HEK293 (cell line): ENCODE measurements at regions of chr7 and their contacts with region 1.

Region 1: GRCh38 chr7:141785706-141786552 is 4.1 kb upstream of the TAS2R5 start:
- H3K4me3 ChIP-seq: no peak overlapping the region
- H3K27ac ChIP-seq: no peak overlapping the region
- H3K4me1 ChIP-seq: no peaks in the 10 kb centered on the region
- CTCF ChIP-seq: peak; percentile 41; the same call in 1 of the 2 replicates

Region 2: DNA sequence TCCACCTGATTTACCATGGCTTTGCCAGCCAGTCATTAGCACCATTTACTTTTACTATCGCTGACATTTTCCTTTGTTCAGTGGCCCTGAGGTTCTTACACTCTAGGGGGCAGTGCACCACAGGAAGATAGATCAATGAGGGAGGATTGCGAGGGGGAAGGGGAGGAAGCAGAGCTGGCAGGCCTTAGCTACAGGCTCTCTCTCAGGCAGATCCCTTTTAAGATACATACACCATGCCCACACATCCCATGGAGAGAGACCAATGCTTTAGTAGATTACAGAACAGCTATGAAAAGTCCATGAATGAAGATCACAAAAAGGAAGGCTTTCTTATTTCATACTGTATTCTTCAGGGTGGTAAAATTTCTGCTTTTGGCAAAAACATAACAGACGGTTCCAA is 131.4 kb before region 1 on chr7:
- CTCF ChIA-PET with region 1: interaction called, 23 read pairs
- POLR2A ChIA-PET with region 1: no interaction called
- H3K4me3 ChIP-seq: no peak overlapping the region
- H3K27ac ChIP-seq: no peak overlapping the region
- H3K4me1 ChIP-seq: no peaks in the 10 kb centered on the region
- CTCF ChIP-seq: peak; percentile 69

Region 3: DNA sequence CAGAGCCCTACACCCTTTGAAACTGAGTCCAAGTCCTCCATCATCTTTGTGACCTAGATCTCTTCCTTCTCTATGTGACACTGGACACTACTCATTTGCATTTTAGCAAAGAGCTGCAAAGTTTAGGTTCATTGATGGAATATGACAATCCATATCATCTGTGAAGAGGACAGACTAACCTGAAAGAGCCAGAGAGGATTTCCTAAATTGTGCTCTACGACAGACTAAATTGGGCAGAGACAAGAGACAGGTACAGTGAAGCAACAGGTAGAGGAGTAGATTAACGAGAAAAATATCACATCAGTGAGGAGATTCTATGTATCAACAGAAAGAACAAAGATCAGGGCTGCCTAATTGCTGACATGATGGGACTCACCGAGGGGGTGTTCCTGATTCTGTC is 22.1 kb before region 1 on chr7 and contains the start of gene TAS2R3:
- CTCF ChIA-PET with region 1: interaction called, 10 read pairs
- POLR2A ChIA-PET with region 1: no interaction called
- H3K4me3 ChIP-seq: no peak within 1 kb of the TSS
- H3K27ac ChIP-seq: no peak within 1 kb of the TSS
- H3K4me1 ChIP-seq: no peaks in the 10 kb centered on the region
- CTCF ChIP-seq: no peak

Region 4: GRCh38 chr7:141838581-141838980 is 52.7 kb after region 1 on chr7:
- CTCF ChIA-PET with region 1: no interaction called
- POLR2A ChIA-PET with region 1: no interaction called
- H3K4me3 ChIP-seq: no peak overlapping the region
- H3K27ac ChIP-seq: no peak overlapping the region
- H3K4me1 ChIP-seq: no peaks in the 10 kb centered on the region
- CTCF ChIP-seq: no peak